ENCODE measurements at regions of chr6 and their contacts with region 1.

Region 1: GRCh38 chr6:30238174-30238795 is 25.1 kb upstream of the TRIM26 start:
- DNase-seq: peak; percentile 27
- ATAC-seq: peak; percentile 88
- H3K4me3 Mint-ChIP-seq: no peak overlapping the region
- H3K27ac Mint-ChIP-seq: no peak overlapping the region
- H3K4me1 Mint-ChIP-seq: no peaks in the 10 kb centered on the region
- H3K27me3 Mint-ChIP-seq: peaks cover 36% of the 10 kb centered on the region
- CTCF ChIP-seq: no peak

Region 2: GRCh38 chr6:30188541-30188940 is 49.7 kb before region 1 on chr6:
- CTCF ChIA-PET with region 1: no interaction called
- POLR2A ChIA-PET with region 1: no interaction called
- DNase-seq: no peak
- ATAC-seq: no peak
- H3K4me3 Mint-ChIP-seq: no peak overlapping the region
- H3K27ac Mint-ChIP-seq: peak overlapping the region; percentile 5; the same call in 1 of the 2 replicates
- H3K4me1 Mint-ChIP-seq: no peaks in the 10 kb centered on the region
- H3K27me3 Mint-ChIP-seq: no peaks in the 10 kb centered on the region; the same call in 1 of the 2 replicates
- CTCF ChIP-seq: no peak

Region 3: DNA sequence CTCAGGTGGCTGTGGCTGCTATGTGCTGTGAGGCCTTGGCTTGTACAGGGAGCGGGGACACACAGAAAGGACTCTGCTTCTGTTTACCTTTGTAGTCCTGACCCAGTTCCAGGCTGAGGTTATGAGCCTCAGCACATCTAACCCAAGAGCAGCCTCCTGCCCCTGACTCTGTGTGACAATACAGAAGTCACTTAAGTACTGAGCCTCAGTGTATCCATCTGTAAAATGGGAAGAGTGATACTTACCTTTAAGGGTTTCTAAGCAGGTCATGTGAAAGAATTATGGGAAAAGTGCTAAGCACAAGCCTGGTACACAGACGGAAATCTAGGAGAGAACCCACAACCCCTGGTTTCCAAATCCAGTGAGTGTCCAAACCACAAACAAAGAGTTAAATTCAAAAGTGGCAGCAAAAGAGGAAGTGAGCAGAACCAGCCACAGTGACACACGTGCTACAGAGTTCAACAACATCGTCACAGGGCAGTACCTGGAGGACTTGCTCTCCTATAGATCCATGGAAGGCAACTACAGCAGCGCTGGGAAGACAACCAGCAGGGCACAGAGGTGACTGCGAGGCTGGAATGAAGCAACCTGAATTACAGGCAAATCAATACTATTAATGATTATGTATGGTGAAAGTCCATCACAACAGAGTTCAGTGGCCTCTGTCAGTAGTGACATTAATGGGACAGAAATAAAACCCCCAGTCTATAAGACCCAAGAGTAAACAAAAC is 37.6 kb before region 1 on chr6:
- CTCF ChIA-PET with region 1: no interaction called
- POLR2A ChIA-PET with region 1: no interaction called
- DNase-seq: no peak
- ATAC-seq: no peak
- H3K4me3 Mint-ChIP-seq: no peak overlapping the region
- H3K27ac Mint-ChIP-seq: no peak overlapping the region
- H3K4me1 Mint-ChIP-seq: peaks cover 40% of the 10 kb centered on the region
- H3K27me3 Mint-ChIP-seq: peaks cover 3% of the 10 kb centered on the region; the same call in 1 of the 2 replicates
- CTCF ChIP-seq: no peak

Region 4: DNA sequence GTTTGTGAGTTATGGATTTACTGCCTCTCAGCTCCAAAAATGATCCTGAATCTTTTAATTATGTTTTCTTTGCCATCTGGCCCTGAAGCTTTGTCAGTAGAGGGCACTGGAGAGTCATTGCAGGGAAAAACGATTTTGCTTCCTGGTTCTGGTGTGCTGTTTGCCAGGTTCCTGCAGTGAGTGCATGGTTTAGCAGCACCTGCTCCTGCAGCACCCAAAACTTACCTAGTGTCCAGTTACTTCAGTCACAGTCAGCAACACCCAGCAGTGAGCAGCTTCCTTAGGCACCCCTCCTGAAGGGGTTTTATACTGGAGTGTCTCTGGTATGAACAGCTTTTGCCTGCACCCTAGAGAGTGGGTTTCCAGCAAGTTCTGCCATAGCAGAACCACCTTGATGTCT is 19.0 kb before region 1 on chr6:
- CTCF ChIA-PET with region 1: interaction called, 14 read pairs
- POLR2A ChIA-PET with region 1: no interaction called
- DNase-seq: peak; percentile 44
- ATAC-seq: peak; percentile 81
- H3K4me3 Mint-ChIP-seq: no peak overlapping the region
- H3K27ac Mint-ChIP-seq: no peak overlapping the region
- H3K4me1 Mint-ChIP-seq: peaks cover 15% of the 10 kb centered on the region
- H3K27me3 Mint-ChIP-seq: peaks cover 32% of the 10 kb centered on the region
- CTCF ChIP-seq: peak; percentile 28; the same call in 1 of the 2 replicates

Region 5: DNA sequence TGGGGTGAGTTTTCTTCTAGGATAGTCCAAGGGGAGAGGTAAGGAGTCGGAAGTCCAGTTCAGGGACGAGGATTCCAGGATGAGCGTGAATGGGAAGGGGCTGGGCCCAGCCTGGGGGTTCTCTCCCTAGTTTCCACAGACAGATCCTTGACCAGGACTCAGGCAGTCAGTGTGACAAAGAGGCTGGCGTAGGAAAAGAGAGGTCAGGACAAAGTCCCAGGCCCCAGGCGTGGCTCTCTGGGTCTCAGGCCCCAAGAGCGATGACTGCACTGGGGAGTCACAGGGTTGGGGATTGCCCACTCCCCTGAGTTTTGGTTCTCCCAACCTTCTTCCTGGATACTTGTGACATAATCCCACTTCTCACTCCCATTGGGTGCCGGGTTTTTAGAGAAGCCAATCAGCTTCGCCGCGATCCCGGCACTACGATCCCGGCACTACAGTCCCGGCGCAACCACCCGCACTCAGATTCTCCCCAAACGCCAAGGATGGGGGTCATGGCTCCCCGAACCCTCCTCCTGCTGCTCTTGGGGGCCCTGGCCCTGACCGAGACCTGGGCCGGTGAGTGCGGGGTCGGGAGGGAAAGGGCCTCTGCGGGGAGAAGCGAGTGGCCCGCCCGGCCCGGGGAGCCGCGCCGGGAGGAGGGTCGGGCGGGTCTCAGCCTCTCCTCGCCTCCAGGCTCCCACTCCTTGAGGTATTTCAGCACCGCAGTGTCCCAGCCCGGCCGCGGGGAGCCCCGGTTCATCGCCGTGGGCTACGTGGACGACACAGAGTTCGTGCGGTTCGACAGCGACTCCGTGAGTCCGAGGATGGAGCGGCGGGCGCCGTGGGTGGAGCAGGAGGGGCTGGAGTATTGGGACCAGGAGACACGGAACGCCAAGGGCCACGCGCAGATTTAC is 21.1 kb after region 1 on chr6:
- CTCF ChIA-PET with region 1: no interaction called
- POLR2A ChIA-PET with region 1: no interaction called
- DNase-seq: peak; percentile 72
- ATAC-seq: peak; percentile 93
- H3K4me3 Mint-ChIP-seq: peak overlapping the region; percentile 74
- H3K27ac Mint-ChIP-seq: no peak overlapping the region
- H3K4me1 Mint-ChIP-seq: peaks cover 14% of the 10 kb centered on the region
- H3K27me3 Mint-ChIP-seq: peaks cover 68% of the 10 kb centered on the region
- CTCF ChIP-seq: no peak

Region 6: DNA sequence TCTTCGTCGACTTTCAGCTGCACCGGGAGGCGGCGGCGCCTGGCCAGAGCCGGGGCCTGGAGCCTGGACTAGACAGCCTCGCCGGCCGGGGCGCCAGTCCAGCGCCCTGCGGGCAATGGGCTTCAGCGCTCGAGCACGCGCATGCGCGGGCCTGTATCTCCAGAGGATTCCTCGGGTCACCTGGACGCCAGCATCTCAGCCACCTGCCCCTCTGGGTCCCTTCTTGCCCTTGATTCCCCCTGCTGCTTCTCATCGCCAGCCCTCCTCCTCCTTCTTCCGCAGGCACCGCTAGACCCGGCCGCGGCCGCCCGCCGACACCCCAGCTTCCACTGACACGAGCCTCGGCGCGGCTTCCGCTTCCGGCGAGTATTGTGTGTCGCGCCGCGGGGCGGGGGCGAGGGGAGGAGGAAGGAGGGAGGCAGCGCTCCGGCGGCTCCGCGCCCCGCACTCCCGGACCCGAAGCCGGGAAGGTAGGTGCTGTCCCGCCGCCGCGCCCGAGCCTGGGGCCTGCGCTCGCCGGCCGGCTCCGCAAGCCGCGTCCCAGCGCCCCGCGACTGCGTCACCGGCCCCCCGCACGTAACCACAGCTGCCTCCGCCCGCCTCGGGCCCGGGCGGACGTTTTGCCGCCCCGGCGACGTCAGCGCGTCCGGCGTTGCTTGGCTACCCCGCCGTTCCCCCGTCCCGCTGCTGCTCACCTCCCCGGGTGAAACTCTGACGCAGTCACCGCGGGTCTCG is 88.4 kb after region 1 on chr6 and contains the start of gene TRIM39:
- CTCF ChIA-PET with region 1: interaction called, 12 read pairs
- POLR2A ChIA-PET with region 1: interaction called, 4 read pairs
- DNase-seq: peak; percentile 77
- ATAC-seq: peak; percentile 27
- H3K4me3 Mint-ChIP-seq: peak within 1 kb of the TSS; percentile 82
- H3K27ac Mint-ChIP-seq: peak within 1 kb of the TSS; percentile 99
- H3K4me1 Mint-ChIP-seq: peaks cover 48% of the 10 kb centered on the region
- H3K27me3 Mint-ChIP-seq: no peaks in the 10 kb centered on the region; the same call in 1 of the 2 replicates
- CTCF ChIP-seq: no peak
- total RNA-seq, gene TRIM39: 22.7 to 24.9 TPM (median 24.0 TPM) in 3 replicates

Measured in WTC11 (cell line).